ENCODE measurements at regions of chr19 and their contacts with region 1.

Region 1: DNA sequence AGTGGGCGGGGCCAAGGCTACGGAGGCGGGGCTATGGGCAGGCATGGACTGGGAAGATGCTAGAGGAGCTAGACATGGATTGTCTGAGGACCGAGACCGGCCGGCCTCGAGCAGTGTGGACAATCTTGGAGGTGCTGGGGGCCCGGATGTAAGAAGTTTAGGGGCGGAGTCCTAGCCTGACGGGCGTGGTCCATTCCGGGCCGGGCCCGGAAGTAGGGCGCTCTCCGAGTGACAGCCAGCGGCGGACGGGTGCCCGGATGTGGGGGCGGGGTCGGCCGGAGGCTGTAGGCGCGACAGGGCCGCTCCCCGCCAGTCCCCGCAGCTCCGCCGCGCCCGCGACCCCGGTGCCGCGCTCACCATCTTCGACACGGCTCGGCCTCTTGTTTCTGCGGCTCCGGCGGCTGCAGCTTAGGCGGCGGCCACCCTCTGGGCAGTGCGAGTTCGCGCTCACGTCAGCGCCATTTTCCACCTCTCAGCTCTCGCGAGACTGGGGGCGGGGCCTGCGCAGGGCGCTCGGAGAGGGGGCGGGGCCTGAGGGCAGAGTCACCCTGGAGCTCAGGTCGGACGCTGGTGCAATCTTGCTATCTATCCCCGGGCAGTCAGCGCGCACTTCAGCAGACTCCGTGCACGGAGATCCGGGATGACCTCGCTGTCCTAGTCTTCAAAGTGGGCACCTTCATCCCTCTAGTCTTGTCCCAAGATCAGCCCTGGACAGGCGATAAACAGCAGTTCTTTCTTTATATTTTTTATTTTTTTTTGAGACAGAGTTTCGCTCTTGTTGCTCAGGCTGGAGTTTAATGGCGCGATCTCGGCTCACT is at the start of gene ZNF414:
- DNase-seq: peak; percentile 98
- H3K4me3 Mint-ChIP-seq: peak within 1 kb of the TSS; percentile 97
- H3K27ac Mint-ChIP-seq: peak within 1 kb of the TSS; percentile 97
- H3K4me1 Mint-ChIP-seq: peaks cover 47% of the 10 kb centered on the region
- H3K27me3 Mint-ChIP-seq: no peaks in the 10 kb centered on the region
- total RNA-seq, gene ZNF414: 19.8 to 24.1 TPM

Region 2: DNA sequence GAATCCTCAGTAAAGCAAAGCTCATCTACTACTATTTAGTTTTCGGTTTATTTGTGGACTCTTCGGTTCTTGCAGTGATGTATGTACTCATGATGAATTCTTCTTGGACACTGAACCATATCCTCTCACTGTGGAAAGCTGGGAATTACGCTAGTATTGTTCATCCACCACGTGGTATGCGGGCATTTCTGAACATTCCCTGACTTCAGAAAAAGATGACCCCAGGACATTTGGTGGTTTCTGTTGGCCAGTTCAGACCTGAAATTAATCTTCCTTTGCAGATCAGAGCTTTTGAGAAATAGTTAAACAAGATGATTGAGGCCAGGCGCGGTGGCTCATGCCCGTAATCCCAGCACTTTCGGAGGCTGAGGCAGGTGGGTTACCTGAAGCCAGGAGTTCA is 339.2 kb before region 1 on chr19:
- CTCF ChIA-PET with region 1: no interaction called
- intact Hi-C with region 1: no loop called
- DNase-seq: no peak
- H3K4me3 Mint-ChIP-seq: no peak overlapping the region
- H3K27ac Mint-ChIP-seq: no peak overlapping the region
- H3K4me1 Mint-ChIP-seq: no peaks in the 10 kb centered on the region
- H3K27me3 Mint-ChIP-seq: no peaks in the 10 kb centered on the region

Region 3: DNA sequence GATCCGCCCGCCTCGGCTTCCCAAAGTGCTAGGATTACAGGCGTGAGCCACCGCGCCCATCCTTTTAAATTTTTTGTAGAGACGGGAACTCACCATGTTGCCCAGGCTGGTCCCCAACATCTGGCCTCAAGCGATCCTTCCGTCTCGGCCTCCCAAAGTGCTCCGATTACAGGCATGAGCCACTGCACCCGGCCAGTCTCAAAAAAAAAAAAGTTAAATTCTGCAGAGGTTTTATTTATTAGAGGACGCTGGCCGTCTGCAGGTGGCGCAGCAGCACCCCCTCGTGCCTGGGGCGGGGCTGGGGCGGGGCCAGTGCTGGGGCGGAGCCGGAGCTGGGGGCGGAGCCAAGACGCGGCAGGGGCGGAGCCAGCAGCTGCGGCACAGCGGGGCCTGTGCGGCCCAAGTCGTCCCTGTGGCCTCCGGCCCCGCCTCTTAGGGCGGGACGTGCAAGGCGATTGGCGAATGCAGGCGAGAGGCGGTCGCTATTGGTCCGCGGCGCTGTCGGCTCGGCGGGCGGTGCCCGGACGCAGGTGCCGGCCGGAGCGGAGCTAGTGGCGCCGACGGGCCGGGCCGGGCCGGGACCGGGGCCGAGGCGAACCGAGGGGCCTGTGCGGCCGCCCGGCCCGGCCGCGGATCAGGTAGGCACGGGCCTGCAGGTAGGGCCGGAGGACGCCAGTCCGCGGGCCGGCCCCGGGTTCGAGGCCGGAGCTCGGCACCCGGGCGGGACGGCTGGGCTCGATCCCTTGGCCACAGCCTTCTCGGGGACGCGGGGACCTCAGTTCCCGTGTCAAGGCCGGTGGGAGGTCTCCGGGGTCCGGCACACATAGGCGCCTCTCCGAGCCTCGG is 100.9 kb before region 1 on chr19 and contains the start of gene MARCHF2:
- CTCF ChIA-PET with region 1: interaction called, 4 read pairs
- intact Hi-C with region 1: loop called (anchors 1 kb)
- DNase-seq: peak; percentile 95
- H3K4me3 Mint-ChIP-seq: peak within 1 kb of the TSS; percentile 56
- H3K27ac Mint-ChIP-seq: no peak within 1 kb of the TSS
- H3K4me1 Mint-ChIP-seq: peaks cover 5% of the 10 kb centered on the region
- H3K27me3 Mint-ChIP-seq: no peaks in the 10 kb centered on the region
- total RNA-seq, gene MARCHF2: 9.2 to 10.3 TPM